Ascending aorta (tissue), 2 donors: ENCODE measurements at regions of chr5 and their contacts with region 1.

Region 1: GRCh38 chr5:83095957-83096539 is 18.7 kb downstream of the XRCC4 start:
- DNase-seq: peak in 1 of 2 donors; percentile 78
- H3K4me3 ChIP-seq: no peak overlapping the region
- H3K27ac ChIP-seq: peak overlapping the region in 1 of 2 donors; percentile 62
- H3K4me1 ChIP-seq: peaks cover 0 to 21% of the 10 kb centered on the region in 2 donors
- H3K27me3 ChIP-seq: no peaks in the 10 kb centered on the region
- CTCF ChIP-seq: no peak

Region 2: DNA sequence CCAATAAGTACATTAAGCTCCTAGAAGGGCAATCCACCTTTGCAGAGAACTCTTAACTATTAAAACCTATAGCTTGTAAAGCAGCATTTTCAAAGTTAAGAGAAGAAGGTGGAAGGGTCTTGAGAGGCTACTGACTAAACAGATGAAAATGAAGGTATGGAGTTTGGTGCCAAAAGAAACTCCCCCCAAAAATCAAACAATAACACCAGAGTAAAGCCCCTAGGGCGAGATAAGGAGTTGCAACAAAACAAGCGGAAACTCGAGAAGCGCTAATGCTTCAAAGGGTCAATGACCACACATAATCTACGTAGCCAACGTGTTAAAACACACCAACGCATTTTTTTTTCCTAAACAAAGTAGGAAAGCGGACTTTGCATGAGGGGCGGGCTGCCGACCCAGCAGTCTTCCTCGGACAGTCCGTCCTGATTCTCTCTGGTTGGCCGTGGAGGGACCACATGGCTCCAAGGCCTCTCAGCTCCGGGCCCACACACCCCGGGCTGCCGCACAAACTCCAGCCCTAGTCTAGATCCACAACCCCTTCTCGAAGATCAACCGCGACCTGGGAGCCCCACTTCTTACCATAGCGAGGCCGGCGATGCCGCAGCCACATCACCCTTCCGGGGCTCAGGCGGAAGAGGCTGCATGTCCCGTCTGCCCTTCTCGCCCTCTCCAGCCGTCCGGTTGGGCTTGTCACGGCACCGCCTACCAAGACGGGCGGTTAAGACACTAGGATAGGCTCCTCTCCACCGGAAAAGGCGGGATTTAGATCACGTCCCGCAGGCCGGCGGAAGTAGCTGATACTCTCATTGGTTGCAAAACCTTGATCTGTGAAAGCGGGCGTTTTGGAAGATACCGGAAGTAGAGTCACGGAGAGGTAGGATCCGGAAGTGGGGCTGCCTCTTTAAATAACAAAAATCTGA is 19.0 kb before region 1 on chr5 and contains the starts of genes TMEM167A and XRCC4:
- intact Hi-C with region 1: loop called (anchors 2 kb)
- DNase-seq: peak; percentile 94 to 98
- H3K4me3 ChIP-seq: peak within 1 kb of the TSS; percentile 86 to 94
- H3K27ac ChIP-seq: peak within 1 kb of the TSS; percentile 89 to 90
- H3K4me1 ChIP-seq: peaks cover 0 to 17% of the 10 kb centered on the region in 2 donors
- H3K27me3 ChIP-seq: no peaks in the 10 kb centered on the region
- CTCF ChIP-seq: no peak
- total RNA-seq, gene TMEM167A: 38.3 TPM
- total RNA-seq, gene XRCC4: not detected

Region 3: GRCh38 chr5:83133797-83134196 is 37.7 kb after region 1 on chr5:
- intact Hi-C with region 1: no loop called
- DNase-seq: no peak
- H3K4me3 ChIP-seq: no peak overlapping the region
- H3K27ac ChIP-seq: no peak overlapping the region
- H3K4me1 ChIP-seq: no peaks in the 10 kb centered on the region
- H3K27me3 ChIP-seq: no peaks in the 10 kb centered on the region
- CTCF ChIP-seq: no peak